Sigmoid colon (tissue), 7 donors: ENCODE measurements at regions of chr6 and their contacts with region 1.

Region 1: DNA sequence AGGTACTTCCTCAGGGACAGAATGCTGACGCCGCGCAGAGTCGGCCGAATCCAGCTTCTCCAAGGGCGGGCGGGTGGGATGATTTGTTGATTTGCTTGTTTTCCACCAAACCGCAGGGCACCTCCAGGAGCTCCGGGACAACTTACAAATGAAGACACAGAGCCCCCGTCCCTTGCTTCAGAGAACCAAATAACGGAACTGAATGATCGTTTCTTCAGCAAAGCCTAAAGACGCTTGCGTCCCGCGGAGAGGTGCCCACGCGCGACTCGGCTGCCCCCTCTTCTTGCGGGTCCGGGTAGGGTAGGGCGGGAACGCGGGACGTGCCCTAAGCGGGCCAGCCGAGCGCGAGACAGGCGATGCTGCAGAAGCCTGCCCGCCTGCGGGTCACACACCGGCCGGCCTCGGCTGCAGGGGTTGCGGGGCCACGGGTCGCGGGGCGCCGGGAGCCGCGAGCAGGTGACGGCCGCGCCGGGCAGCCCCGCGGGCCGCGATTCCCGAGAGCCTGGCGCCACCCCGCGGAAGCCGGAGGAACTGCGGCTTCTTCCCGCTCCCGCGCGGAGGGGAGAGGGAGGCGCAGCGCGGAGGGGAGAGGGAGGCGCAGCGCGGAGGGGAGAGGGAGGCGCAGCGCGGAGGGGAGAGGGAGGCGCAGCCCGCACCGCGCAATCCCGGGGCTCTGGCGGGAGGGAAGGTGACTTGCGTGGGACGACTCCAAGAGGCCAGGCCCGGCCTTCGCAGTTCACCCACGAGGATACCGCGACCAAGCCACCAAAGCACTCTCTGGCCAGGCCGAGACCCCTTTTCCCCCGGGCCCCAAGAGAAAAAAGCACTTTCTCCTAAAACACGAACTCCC is 7.7 kb upstream of the FOXF2 start:
- DNase-seq: no peak
- H3K4me3 ChIP-seq: peak overlapping the region; percentile 24 to 51 (median 45)
- H3K27ac ChIP-seq: peak overlapping the region; percentile 84 to 96 (median 89)
- H3K4me1 ChIP-seq: peaks cover 0 to 54% (median 52%) of the 10 kb centered on the region in 4 donors
- H3K27me3 ChIP-seq: peaks cover 45 to 100% (median 83%) of the 10 kb centered on the region in 3 donors
- CTCF ChIP-seq: peak in 3 of 4 experiments; percentile 28 to 95 (median 77)
- EP300 ChIP-seq: no peak
- POLR2A ChIP-seq: no peak

Region 2: DNA sequence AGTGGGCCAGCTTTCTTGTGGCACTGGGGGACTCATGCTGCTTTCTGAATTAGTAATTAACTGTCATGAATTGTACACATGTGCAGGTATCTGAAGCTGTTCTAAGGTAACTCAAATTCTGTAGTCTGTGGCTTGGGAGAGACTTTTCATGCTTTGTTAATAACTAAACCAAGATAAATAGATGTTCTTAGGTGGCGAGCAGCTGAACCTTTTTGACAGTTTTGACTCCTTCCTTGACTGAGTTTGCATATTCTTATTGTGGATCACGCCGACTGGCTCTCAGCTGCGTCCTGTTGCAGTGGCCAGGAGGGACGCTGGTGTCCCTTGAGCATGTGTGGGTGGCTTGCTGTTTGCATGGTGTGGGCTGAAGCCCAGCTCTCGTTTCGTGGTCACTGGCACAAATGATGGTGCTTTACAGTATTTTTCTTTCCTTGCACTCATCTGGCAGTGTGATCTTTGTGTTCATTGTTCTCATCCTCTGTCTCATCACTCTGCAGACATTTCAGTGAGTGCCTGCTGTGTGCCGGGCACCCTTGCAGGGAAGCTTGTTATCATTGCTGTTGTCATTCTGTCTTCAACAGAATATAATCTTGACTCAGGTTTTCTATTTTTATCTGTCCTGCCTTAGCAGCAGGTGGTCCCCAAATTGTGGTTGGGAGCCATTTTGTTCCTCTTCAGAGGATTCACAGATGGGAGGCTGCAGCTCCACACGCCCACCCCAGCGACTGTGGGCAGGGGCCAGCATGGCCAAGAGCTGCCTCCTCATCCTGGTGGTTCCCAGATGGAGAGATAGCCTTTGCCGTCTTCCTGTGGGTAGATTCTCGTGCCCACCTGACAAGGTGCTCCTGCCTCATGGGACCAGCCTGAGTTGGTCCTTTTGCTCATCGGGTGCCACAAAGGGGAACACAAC is 1049.8 kb before region 1 on chr6:
- intact Hi-C with region 1: loop called (anchors 10 kb)
- DNase-seq: no peak
- H3K4me3 ChIP-seq: no peak overlapping the region
- H3K27ac ChIP-seq: peak overlapping the region in 2 of 4 donors; percentile 39 to 69
- H3K4me1 ChIP-seq: peaks cover 0 to 65% (median 48%) of the 10 kb centered on the region in 4 donors
- H3K27me3 ChIP-seq: no peaks in the 10 kb centered on the region
- CTCF ChIP-seq: no peak
- EP300 ChIP-seq: no peak
- POLR2A ChIP-seq: no peak

Region 3: GRCh38 chr6:593139-593906 is 788.4 kb before region 1 on chr6:
- intact Hi-C with region 1: loop called (anchors 2 kb)
- DNase-seq: no peak
- H3K4me3 ChIP-seq: no peak overlapping the region
- H3K27ac ChIP-seq: peak overlapping the region; percentile 58 to 66 (median 64)
- H3K4me1 ChIP-seq: peaks cover 0 to 9% (median 0%) of the 10 kb centered on the region in 4 donors
- H3K27me3 ChIP-seq: no peaks in the 10 kb centered on the region
- CTCF ChIP-seq: peak in 3 of 4 experiments; percentile 54 to 69 (median 63)
- EP300 ChIP-seq: no peak
- POLR2A ChIP-seq: no peak

Region 4: DNA sequence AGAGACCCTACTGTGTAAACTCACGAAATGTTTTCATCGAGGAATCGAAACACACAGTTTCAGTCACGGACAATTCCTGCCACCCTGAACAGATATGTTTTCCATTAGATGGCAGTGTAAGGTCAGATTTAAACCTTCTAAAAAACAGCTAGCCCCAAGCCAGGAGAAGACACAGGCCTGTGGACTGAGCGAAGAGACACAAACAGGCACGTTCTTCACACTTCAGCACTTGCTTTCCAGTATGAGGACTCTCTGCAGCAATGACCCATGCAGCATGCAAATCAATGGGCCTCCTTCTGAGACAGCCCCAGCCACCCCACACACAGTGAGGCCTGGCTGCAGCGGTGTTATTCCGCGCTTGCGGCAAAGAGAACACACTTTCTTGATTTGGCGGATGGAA is 756.7 kb before region 1 on chr6:
- intact Hi-C with region 1: loop called (anchors 10 kb)
- DNase-seq: peak; percentile 69
- H3K4me3 ChIP-seq: peak overlapping the region in 1 of 4 donors; percentile 5
- H3K27ac ChIP-seq: peak overlapping the region; percentile 61 to 75 (median 67)
- H3K4me1 ChIP-seq: peaks cover 0 to 24% (median 4%) of the 10 kb centered on the region in 4 donors
- H3K27me3 ChIP-seq: no peaks in the 10 kb centered on the region
- CTCF ChIP-seq: peak in 2 of 4 experiments; percentile 11 to 29
- EP300 ChIP-seq: no peak
- POLR2A ChIP-seq: no peak

Region 5: DNA sequence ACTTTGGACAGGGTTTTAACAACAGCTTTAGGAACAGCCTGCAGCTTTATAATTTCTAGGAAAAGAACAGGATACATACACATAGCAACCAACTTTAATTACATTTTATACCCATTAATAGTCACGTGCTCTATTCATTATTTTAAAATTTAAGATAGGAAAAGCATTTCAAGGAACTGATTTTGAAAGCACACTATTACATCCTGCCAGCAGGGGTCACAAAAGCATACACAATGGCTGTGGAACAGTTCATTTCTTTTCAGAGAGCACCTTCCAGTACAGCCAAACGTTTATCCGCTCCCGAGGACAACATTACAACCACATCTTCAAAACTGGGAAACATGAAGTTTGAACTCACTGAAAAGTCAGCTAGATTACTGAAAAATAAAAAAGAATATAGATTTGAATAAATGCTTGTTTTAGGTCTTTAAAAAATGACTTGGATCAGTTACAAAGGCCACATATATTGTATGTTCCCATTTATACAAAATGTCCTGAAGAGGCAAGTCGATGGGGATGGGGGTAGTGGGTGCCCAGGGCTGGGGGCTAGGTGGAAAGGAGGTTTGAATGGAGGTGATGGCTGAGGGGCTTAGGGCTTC is 584.1 kb before region 1 on chr6:
- intact Hi-C with region 1: loop called (anchors 1 kb)
- DNase-seq: no peak
- H3K4me3 ChIP-seq: no peak overlapping the region
- H3K27ac ChIP-seq: no peak overlapping the region
- H3K4me1 ChIP-seq: no peaks in the 10 kb centered on the region
- H3K27me3 ChIP-seq: peaks cover 3 to 25% (median 9%) of the 10 kb centered on the region in 3 donors
- CTCF ChIP-seq: peak; percentile 32 to 78 (median 73)
- EP300 ChIP-seq: no peak
- POLR2A ChIP-seq: no peak

Region 6: GRCh38 chr6:912871-913835 is 468.6 kb before region 1 on chr6:
- intact Hi-C with region 1: loop called (anchors 5 kb)
- DNase-seq: no peak
- H3K4me3 ChIP-seq: no peak overlapping the region
- H3K27ac ChIP-seq: no peak overlapping the region
- H3K4me1 ChIP-seq: peaks cover 0 to 5% (median 0%) of the 10 kb centered on the region in 4 donors
- H3K27me3 ChIP-seq: peaks cover 0 to 17% (median 0%) of the 10 kb centered on the region in 3 donors
- CTCF ChIP-seq: peak in 1 of 4 experiments; percentile 25
- EP300 ChIP-seq: no peak
- POLR2A ChIP-seq: no peak

Region 7: DNA sequence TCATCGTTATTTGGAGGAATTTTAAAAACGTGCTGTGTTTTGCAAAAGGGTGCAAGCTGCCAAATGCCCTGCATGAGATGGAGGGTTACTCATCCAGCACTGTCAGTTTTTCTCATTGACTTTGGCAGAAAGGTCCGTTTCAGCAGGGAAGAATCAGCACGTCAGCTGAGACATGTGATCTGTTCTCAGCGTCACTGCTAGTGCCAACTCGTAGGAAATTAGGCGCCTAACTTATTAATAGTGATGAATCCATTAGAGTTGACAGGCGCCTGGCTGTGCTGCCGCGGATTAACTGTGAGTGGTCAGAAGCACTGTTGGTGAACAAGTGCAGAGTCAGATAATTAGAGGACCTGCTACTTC is 245.3 kb before region 1 on chr6:
- intact Hi-C with region 1: no loop called
- DNase-seq: no peak
- H3K4me3 ChIP-seq: no peak overlapping the region
- H3K27ac ChIP-seq: peak overlapping the region in 1 of 4 donors; percentile 73
- H3K4me1 ChIP-seq: peaks cover 0 to 14% (median 11%) of the 10 kb centered on the region in 4 donors
- H3K27me3 ChIP-seq: no peaks in the 10 kb centered on the region
- CTCF ChIP-seq: no peak
- EP300 ChIP-seq: no peak
- POLR2A ChIP-seq: no peak